Aorta (tissue), 5 donors: ENCODE measurements at regions of chr2 and their contacts with region 1.

Region 1: GRCh38 chr2:42964439-42965083 is 172.2 kb upstream of the HAAO start:
- DNase-seq: peak; percentile 94 to 95
- ATAC-seq: peak; percentile 5
- H3K4me3 ChIP-seq: no peak overlapping the region
- H3K27ac ChIP-seq: peak overlapping the region in 1 of 2 donors; percentile 46
- H3K4me1 ChIP-seq: no peaks in the 10 kb centered on the region
- H3K27me3 ChIP-seq: no peaks in the 10 kb centered on the region

Region 2: DNA sequence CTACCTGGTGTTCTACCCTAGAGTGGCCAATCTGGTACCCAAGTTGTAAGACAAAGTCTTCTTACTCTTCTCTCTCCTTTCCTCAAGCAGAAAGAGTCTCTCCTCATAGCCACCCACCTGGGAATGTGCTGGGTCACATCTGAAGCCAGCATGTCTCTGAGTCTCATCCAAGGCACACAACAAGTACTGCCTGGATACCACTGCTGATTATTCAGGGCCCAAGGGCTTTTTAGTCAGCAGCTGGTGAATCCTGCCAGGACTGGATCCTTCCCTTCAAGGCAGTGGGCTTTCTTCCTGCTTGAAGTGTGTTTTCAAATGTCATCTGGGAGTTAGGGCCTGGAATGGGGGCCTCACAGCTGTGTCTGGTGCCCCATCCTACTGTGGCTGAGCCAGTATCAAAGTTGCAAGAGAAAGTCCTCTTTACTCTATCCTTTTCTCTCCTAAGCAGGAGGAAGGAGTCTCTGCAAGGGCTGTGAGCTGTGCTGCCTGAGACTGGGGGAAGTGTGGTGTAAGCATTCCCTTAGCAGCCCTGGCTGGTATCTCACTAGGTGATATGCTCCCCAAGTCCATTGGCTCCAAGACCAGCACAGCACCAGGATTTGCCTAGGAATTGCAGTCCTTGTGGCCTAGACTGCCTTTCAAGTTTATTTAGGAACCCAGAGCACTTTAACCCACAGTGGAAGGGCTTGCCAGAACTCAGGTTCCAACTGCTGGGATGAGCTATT is 227.8 kb before region 1 on chr2:
- intact Hi-C with region 1: no loop called
- DNase-seq: no peak
- ATAC-seq: no peak
- H3K4me3 ChIP-seq: no peak overlapping the region
- H3K27ac ChIP-seq: no peak overlapping the region
- H3K4me1 ChIP-seq: no peaks in the 10 kb centered on the region
- H3K27me3 ChIP-seq: no peaks in the 10 kb centered on the region

Region 3: DNA sequence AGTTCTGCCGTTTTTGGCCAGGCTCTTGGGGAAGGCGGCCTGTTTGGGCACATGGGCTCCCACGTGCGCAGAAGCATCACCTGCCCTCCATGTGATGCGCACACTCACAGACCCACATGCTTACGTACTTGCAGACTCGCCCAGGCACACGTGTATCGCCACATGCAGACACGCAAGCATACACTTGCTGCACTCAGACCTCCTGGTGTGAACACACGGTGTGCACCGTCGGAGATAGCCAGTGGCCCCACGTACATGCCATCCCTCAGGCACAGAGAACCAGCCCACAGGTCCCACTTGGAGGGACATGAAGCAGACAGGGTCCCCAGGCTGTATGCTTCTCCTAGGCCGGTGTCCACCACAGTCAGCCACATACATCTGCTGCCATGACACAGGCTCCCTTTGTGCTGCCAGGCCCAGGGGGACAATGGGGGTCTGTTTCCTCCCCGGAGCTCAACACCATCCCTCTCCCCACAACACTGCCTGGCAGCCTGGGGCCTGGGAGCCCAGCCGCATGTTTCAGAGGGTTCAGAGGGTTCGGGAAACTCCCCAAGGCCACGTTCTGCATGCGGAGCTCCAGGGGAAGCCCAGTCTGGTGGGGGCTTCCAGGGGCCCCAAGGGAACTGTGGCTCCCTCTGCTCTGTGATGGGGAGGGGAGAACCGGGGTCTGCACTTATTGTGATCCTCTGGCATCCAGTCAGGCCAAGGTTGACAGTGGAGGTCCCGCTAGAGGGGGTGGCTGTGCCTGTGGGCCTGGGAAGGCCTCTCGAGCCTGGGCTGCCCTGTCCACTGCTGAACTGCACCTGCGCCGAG is 35.9 kb after region 1 on chr2:
- intact Hi-C with region 1: no loop called
- DNase-seq: peak in 1 of 2 donors; percentile 67
- ATAC-seq: peak; percentile 46
- H3K4me3 ChIP-seq: no peak overlapping the region
- H3K27ac ChIP-seq: no peak overlapping the region
- H3K4me1 ChIP-seq: no peaks in the 10 kb centered on the region
- H3K27me3 ChIP-seq: no peaks in the 10 kb centered on the region

Region 4: DNA sequence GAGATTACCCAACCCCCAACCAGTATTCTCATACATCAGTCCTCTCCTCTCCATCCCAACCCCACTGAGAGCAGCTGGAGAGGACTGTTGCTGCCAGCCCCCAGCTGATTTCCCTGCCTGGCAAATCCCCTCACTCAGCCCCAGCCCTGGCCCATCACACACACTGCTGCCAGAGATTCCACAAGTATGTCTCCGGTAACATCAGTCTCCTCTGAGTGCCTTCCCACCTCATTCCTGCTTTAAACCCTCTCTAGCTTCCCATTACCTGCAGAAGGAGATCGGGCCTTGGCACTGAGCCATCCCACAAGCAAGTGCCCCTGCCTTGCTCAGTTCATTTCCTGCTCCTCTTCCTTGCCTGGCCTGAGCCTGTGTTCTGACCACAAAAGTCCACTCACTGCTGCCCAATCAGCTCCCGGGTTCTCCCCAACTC is 312.4 kb after region 1 on chr2:
- intact Hi-C with region 1: no loop called
- DNase-seq: no peak
- ATAC-seq: no peak
- H3K4me3 ChIP-seq: no peak overlapping the region
- H3K27ac ChIP-seq: peak overlapping the region; percentile 64 to 99
- H3K4me1 ChIP-seq: peaks cover 0 to 7% of the 10 kb centered on the region in 2 donors
- H3K27me3 ChIP-seq: no peaks in the 10 kb centered on the region

Region 5: DNA sequence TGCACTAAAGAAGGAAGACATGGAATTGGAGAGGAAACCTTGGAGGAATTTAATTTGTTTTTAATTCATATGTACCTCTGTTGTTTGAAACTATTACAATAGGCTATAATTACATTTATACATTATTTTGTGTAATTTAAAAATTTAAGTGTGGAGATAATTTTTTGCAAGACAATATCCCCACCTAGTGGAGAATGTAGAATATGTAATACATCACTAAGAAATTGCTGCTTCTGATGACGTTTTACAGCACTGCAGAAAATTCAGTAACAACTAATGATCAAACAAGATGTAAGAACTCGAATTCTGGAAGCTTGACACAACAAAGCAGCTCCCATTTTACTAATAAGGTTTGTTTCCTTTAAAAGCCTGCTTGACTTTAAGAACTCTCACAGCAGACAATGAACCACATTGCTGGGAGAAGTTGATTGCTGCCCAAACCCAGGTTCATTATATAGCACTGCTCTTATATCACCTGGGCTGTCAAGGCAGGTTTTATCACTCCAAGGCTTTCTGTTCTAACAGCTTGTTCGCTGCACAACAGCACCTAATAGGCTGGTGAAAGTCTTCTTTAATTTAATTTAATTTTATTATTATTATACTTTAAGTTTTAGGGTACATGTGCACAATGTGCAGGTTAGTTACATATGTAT is 577.9 kb after region 1 on chr2:
- intact Hi-C with region 1: loop called in 1 of 2 experiments (anchors 5 kb)
- DNase-seq: no peak
- ATAC-seq: peak; percentile 72
- H3K4me3 ChIP-seq: no peak overlapping the region
- H3K27ac ChIP-seq: no peak overlapping the region
- H3K4me1 ChIP-seq: peaks cover 2 to 17% of the 10 kb centered on the region in 2 donors
- H3K27me3 ChIP-seq: no peaks in the 10 kb centered on the region